Right ventricle myocardium inferior (tissue), 1 donor: ENCODE measurements at regions of chr12 and their contacts with region 1.

Region 1: GRCh38 chr12:71415336-71416231 is 24.0 kb upstream of the LGR5 start:
- DNase-seq: no peak
- ATAC-seq: no peak

Region 2: DNA sequence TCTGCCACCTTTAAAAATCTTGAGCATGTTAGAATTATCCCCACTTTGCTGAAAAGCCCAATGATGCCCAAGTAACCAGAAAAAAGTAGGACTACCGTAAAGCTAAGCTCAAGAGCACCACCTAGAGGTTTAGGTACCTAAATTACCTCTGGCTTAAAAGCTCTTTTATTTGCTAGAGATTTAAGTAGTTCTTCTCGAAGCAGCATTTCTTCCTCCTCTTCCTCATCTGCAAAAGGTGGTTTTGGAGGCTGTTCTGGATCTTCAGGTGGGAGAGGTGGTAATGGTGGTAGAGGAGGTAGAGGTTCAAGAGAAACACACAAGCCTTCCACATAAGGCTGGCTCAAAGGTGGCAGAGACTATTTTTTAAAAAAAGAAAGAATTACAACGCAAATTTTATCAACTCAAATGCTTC is 221.1 kb after region 1 on chr12:
- intact Hi-C with region 1: loop called (anchors 5 kb)
- DNase-seq: no peak
- ATAC-seq: no peak